GM12878 (cell line): ENCODE measurements at regions of chr1 and their contacts with region 1.

Region 1: DNA sequence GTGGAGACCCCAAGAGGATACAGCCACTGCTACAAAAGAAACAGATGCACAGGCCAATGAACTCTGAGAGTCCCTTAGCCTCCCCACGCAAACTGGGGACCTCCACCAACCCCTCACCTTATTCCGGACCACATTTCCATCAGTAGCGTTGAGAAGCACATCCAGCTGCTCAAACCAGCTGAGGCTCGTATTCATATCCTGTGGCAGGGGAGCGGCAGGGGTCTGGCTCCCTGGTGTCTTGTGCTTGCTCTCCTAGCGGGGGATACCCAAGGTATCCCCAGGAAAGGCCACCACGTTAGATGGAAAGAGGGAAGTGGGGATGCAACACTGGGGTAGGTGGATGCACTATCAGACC is 481 bp downstream of the CCDC163 start:
- DNase-seq: no peak
- ATAC-seq: no peak; the same call in 2 of the 3 replicates
- H3K4me3 ChIP-seq: peak overlapping the region; percentile 93
- H3K27ac ChIP-seq: peak overlapping the region; percentile 54
- H3K4me1 ChIP-seq: peaks cover 15% of the 10 kb centered on the region
- H3K27me3 ChIP-seq: no peaks in the 10 kb centered on the region
- CTCF ChIP-seq: no peak
- EP300 ChIP-seq: no peak
- POLR2A ChIP-seq: no peak
- RAD21 ChIP-seq: no peak

Region 2: GRCh38 chr1:45339789-45340570 is 159.4 kb before region 1 on chr1 and contains the starts of genes MUTYH and TOE1:
- CTCF ChIA-PET with region 1: interaction called, 94 read pairs
- POLR2A ChIA-PET with region 1: interaction called, 18 read pairs
- RAD21 ChIA-PET with region 1: interaction called, 83 read pairs
- SMC1A ChIA-PET with region 1: interaction called, 28 read pairs
- in situ Hi-C with region 1: no loop called
- intact Hi-C with region 1: loop called (anchors 1 kb)
- DNase-seq: peak; percentile 73
- ATAC-seq: peak; percentile 92
- H3K4me3 ChIP-seq: peak within 1 kb of the TSS; percentile 71
- H3K27ac ChIP-seq: peak within 1 kb of the TSS; percentile 93
- H3K4me1 ChIP-seq: peaks cover 11% of the 10 kb centered on the region
- H3K27me3 ChIP-seq: no peaks in the 10 kb centered on the region
- CTCF ChIP-seq: no peak
- EP300 ChIP-seq: no peak
- POLR2A ChIP-seq: peak; percentile 97
- RAD21 ChIP-seq: no peak
- polyA plus RNA-seq, gene MUTYH: 2.5 to 10.5 TPM
- polyA plus RNA-seq, gene TOE1: 33.5 to 38.0 TPM

Region 3: GRCh38 chr1:45359882-45360513 is 139.4 kb before region 1 on chr1:
- CTCF ChIA-PET with region 1: interaction called, 508 read pairs
- POLR2A ChIA-PET with region 1: interaction called, 3 read pairs
- RAD21 ChIA-PET with region 1: interaction called, 319 read pairs
- SMC1A ChIA-PET with region 1: interaction called, 369 read pairs
- in situ Hi-C with region 1: loop called (anchors 5 kb)
- intact Hi-C with region 1: no loop called
- DNase-seq: no peak
- ATAC-seq: peak; percentile 81
- H3K4me3 ChIP-seq: no peak overlapping the region
- H3K27ac ChIP-seq: no peak overlapping the region
- H3K4me1 ChIP-seq: peaks cover 9% of the 10 kb centered on the region
- H3K27me3 ChIP-seq: no peaks in the 10 kb centered on the region
- CTCF ChIP-seq: peak; percentile 49 to 78 (median 59); a peak in 5 of 6 replicates
- EP300 ChIP-seq: no peak
- POLR2A ChIP-seq: no peak
- RAD21 ChIP-seq: peak; percentile 97

Region 4: GRCh38 chr1:45543581-45544417 is 44.4 kb after region 1 on chr1:
- CTCF ChIA-PET with region 1: interaction called, 4 read pairs
- POLR2A ChIA-PET with region 1: interaction called, 28 read pairs
- RAD21 ChIA-PET with region 1: interaction called, 5 read pairs
- SMC1A ChIA-PET with region 1: no interaction called
- in situ Hi-C with region 1: no loop called
- intact Hi-C with region 1: no loop called
- DNase-seq: peak; percentile 76
- ATAC-seq: peak; percentile 79
- H3K4me3 ChIP-seq: peak overlapping the region; percentile 25; the same call in 1 of the 2 replicates
- H3K27ac ChIP-seq: peak overlapping the region; percentile 78
- H3K4me1 ChIP-seq: peaks cover 30% of the 10 kb centered on the region
- H3K27me3 ChIP-seq: no peaks in the 10 kb centered on the region
- CTCF ChIP-seq: no peak
- EP300 ChIP-seq: peak; percentile 84 to 93
- POLR2A ChIP-seq: 0 out of 2 replicates have a peak, but pooled peaks have one; percentile 29
- RAD21 ChIP-seq: no peak

Region 5: DNA sequence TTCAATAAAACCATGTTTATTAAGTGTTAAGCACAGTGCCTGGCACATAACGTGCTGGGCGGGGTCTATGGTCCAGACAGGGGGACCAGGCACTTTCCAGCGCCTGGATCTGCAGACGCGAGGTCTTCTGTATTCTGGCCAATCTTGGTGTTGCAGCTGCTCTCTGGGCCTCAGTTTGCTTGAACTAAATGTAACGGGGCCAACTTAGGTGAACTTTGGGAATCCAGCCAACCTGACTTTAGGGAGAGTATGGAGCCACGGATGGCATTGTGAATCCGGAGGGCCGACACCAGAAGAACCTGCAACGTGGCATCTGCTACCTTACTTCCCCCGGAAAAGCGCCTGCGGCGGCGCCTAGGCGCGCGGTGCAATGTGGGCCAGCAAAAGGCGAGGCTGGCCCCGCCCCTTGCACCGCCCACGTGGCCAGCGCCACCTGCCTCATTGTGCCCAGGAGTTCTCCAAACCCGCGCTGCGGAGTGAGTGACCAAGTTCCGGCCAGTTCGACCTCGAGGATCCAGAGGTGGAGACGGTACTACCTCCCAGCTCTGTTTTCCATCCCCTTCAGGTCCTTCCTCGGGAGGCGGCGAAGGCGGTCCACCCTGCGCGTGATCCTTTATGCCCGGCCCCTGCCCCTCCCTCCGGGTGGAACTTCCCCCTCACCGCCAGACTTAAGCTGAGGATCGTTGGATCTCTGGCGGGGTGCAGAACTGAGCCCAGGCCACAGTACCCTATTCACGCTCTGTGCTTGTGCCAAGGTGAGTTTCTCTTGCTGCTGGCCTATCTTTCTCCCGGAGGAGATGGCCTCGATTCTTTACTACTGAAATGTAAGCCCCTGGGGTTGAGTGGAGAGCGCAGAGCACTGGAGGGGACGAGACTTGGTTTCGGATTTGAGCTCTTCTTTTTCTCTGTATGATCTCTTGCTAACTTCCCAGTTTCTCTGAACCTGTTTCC is 51.3 kb after region 1 on chr1 and contains the start of gene AKR1A1:
- CTCF ChIA-PET with region 1: interaction called, 4 read pairs
- POLR2A ChIA-PET with region 1: interaction called, 28 read pairs
- RAD21 ChIA-PET with region 1: interaction called, 8 read pairs
- SMC1A ChIA-PET with region 1: interaction called, 11 read pairs
- in situ Hi-C with region 1: no loop called
- intact Hi-C with region 1: loop called (anchors 5 kb)
- DNase-seq: peak; percentile 74
- ATAC-seq: peak; percentile 94
- H3K4me3 ChIP-seq: peak within 1 kb of the TSS; percentile 87
- H3K27ac ChIP-seq: peak within 1 kb of the TSS; percentile 91
- H3K4me1 ChIP-seq: peaks cover 16% of the 10 kb centered on the region
- H3K27me3 ChIP-seq: no peaks in the 10 kb centered on the region
- CTCF ChIP-seq: no peak
- EP300 ChIP-seq: no peak
- POLR2A ChIP-seq: peak; percentile 92
- RAD21 ChIP-seq: no peak
- polyA plus RNA-seq, gene AKR1A1: 199 to 200 TPM

Region 6: DNA sequence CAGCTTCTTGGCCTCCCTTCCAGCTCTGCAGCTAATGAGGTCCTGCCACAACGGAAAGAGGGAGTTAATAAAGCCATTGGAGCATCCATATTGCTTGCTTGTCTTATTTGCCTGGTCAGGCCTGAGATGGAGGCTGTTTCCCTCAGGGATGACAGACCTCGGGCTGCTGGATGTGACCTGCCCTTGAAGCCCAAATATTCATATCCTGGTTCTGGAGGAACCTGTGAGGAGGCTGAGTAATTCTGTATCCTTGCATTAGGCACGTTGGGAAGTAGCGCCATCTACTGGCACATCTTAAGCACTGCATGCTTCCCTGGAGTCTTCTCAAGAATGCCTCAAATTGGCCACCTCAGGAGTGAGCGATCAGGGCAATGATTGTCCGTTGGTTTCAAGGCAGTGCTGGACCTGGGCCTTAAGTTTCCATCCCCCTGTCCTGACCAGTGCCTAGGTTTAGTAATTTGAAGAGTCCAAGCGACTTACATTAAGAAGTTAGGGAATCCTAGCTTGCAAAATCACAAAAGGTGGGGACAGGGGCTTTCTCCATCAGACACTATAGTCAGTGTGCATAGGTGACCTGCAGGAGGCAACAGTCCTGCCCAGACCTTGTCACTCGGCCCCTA is 70.7 kb after region 1 on chr1:
- CTCF ChIA-PET with region 1: interaction called, 84 read pairs
- POLR2A ChIA-PET with region 1: interaction called, 4 read pairs
- RAD21 ChIA-PET with region 1: interaction called, 24 read pairs
- SMC1A ChIA-PET with region 1: interaction called, 47 read pairs
- in situ Hi-C with region 1: no loop called
- intact Hi-C with region 1: no loop called
- DNase-seq: no peak
- ATAC-seq: peak; percentile 97
- H3K4me3 ChIP-seq: no peak overlapping the region
- H3K27ac ChIP-seq: no peak overlapping the region
- H3K4me1 ChIP-seq: no peaks in the 10 kb centered on the region
- H3K27me3 ChIP-seq: no peaks in the 10 kb centered on the region
- CTCF ChIP-seq: peak; percentile 97 to 99 (median 98); a peak in 5 of 6 replicates
- EP300 ChIP-seq: no peak
- POLR2A ChIP-seq: 0 out of 2 replicates have a peak, but pooled peaks have one; percentile 14
- RAD21 ChIP-seq: peak; percentile 95

Region 7: DNA sequence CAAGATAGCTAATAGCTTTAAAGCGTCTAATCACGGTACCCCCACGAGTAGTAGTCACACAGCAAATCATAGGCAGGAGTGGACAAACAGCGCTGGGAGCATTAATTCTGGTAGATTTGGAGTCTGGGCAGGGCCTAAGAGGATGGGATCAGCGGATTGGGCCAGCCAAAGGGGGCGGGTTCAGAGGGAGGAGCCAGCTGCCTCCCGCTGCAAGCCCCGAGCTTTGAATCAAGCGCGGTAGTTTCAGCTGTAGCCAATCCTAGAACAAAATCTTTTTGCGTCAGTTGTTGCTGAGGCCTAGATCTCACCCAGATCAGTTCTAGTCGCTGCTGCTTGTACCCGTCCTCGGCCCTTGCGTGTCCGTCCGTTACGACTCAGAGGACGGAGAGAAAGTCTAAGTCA is 83.9 kb after region 1 on chr1:
- CTCF ChIA-PET with region 1: interaction called, 5 read pairs
- POLR2A ChIA-PET with region 1: interaction called, 35 read pairs
- RAD21 ChIA-PET with region 1: interaction called, 15 read pairs
- SMC1A ChIA-PET with region 1: interaction called, 13 read pairs
- in situ Hi-C with region 1: no loop called
- intact Hi-C with region 1: no loop called
- DNase-seq: peak; percentile 98
- ATAC-seq: peak; percentile 89
- H3K4me3 ChIP-seq: peak overlapping the region; percentile 94
- H3K27ac ChIP-seq: peak overlapping the region; percentile 97
- H3K4me1 ChIP-seq: peaks cover 12% of the 10 kb centered on the region; the same call in 1 of the 2 replicates
- H3K27me3 ChIP-seq: no peaks in the 10 kb centered on the region
- CTCF ChIP-seq: no peak
- EP300 ChIP-seq: no peak
- POLR2A ChIP-seq: no peak
- RAD21 ChIP-seq: no peak